ENCODE measurements at regions of chr9 and their contacts with region 1.

Region 1: DNA sequence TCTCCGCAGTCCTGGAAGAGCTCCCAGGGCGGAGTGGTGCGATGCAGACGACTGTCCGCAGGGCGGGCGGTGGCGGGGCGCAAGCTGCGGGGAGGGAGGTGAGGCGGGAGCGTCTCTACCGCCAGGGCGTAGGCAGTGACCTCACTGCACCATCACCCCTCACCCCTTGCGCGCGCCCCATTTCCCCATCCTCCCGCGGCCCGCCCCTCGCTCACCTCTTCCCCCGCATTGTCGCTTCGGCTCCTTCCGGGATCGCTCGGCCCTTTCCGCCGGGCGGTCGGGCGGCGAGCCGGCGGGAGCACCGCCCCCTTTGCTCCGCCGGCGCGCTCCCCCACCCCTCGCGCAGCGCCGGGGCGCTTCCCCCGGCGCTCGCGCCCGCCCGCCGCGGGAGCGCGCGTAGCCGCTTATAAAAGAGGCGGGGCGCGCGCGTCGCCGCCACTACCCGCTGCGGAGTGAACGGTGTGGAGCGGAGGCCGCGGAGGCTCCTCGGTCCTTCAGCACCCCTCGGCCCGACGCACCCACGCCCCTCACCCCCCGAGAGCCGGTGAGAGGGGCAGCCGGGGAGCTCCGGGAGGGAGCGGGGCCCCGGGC is at the start of gene SPTAN1:
- DNase-seq: peak; percentile 69 to 76
- ATAC-seq: peak; percentile 88 to 94
- H3K4me3 ChIP-seq: peak within 1 kb of the TSS; percentile 74 to 100 (median 91)
- H3K27ac ChIP-seq: peak within 1 kb of the TSS; percentile 77 to 97 (median 92)
- H3K4me1 ChIP-seq: peaks cover 45 to 49% of the 10 kb centered on the region in 2 donors
- H3K27me3 ChIP-seq: no peaks in the 10 kb centered on the region
- CTCF ChIP-seq: peak in 3 of 5 experiments; percentile 17 to 28 (median 26)
- POLR2A ChIP-seq: peak; percentile 98 to 99
- total RNA-seq, gene SPTAN1: 30.2 to 41.5 (median 33.0) TPM

Region 2: GRCh38 chr9:128439273-128439672 is 113.0 kb before region 1 on chr9:
- in situ Hi-C with region 1: no loop called
- intact Hi-C with region 1: no loop called
- DNase-seq: no peak
- ATAC-seq: no peak
- H3K4me3 ChIP-seq: no peak overlapping the region
- H3K27ac ChIP-seq: no peak overlapping the region
- H3K4me1 ChIP-seq: no peaks in the 10 kb centered on the region
- H3K27me3 ChIP-seq: no peaks in the 10 kb centered on the region
- CTCF ChIP-seq: no peak
- POLR2A ChIP-seq: no peak

Region 3: DNA sequence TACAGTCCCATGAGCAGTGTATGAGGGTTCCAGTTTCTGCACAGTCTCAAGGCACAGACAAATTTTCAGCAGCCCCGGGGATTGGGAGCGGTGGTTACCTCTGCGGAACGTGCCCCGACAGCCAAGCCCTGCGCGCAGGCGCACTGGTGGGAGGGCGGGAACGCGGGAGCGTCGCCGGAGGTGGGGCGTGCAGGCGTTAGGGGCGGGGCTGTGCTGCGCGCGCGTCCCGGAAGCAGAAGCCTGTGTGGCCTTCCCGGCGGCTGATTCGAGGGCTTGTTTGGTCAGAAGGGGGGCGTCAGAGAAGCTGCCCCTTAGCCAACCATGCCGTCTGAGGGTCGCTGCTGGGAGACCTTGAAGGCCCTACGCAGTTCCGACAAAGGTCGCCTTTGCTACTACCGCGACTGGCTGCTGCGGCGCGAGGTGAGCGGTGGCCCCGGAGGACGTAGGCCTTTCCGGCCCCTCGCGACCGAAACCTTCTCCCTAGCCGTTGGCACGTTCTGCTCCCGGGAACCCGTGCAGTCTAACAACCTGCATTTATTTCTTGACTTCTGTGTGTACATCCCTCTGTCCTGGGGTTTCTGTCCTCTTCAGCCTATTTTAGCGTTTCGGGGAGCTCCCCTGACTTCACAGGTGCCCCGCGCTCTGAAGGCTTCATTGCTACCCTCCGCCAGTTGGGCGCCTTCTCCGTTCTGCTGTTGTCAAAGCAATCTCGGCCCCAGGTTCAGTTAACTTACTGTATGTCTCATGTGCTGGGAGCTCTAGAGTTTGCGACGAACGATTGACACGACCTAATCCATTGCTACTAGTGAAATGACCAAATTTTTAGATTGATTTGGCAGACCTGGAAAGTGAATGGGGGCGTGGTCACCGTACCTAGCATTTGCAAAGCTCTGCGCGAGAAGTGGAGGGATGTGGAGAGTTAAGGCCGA is 47.5 kb before region 1 on chr9 and contains the start of gene GLE1:
- in situ Hi-C with region 1: no loop called
- intact Hi-C with region 1: loop called (anchors 5 kb)
- DNase-seq: peak; percentile 86 to 91
- ATAC-seq: peak; percentile 94 to 97
- H3K4me3 ChIP-seq: peak within 1 kb of the TSS; percentile 78 to 95 (median 88)
- H3K27ac ChIP-seq: peak within 1 kb of the TSS; percentile 82 to 93 (median 84)
- H3K4me1 ChIP-seq: peaks cover 15 to 18% of the 10 kb centered on the region in 2 donors
- H3K27me3 ChIP-seq: no peaks in the 10 kb centered on the region
- CTCF ChIP-seq: no peak
- POLR2A ChIP-seq: peak; percentile 30 to 68
- total RNA-seq, gene GLE1: 31.4 to 56.7 (median 32.7) TPM

Region 4: GRCh38 chr9:128588581-128589233 is 36.5 kb after region 1 on chr9:
- in situ Hi-C with region 1: no loop called
- intact Hi-C with region 1: no loop called
- DNase-seq: no peak
- ATAC-seq: no peak
- H3K4me3 ChIP-seq: no peak overlapping the region
- H3K27ac ChIP-seq: no peak overlapping the region
- H3K4me1 ChIP-seq: no peaks in the 10 kb centered on the region
- H3K27me3 ChIP-seq: no peaks in the 10 kb centered on the region
- CTCF ChIP-seq: no peak
- POLR2A ChIP-seq: no peak

Region 5: DNA sequence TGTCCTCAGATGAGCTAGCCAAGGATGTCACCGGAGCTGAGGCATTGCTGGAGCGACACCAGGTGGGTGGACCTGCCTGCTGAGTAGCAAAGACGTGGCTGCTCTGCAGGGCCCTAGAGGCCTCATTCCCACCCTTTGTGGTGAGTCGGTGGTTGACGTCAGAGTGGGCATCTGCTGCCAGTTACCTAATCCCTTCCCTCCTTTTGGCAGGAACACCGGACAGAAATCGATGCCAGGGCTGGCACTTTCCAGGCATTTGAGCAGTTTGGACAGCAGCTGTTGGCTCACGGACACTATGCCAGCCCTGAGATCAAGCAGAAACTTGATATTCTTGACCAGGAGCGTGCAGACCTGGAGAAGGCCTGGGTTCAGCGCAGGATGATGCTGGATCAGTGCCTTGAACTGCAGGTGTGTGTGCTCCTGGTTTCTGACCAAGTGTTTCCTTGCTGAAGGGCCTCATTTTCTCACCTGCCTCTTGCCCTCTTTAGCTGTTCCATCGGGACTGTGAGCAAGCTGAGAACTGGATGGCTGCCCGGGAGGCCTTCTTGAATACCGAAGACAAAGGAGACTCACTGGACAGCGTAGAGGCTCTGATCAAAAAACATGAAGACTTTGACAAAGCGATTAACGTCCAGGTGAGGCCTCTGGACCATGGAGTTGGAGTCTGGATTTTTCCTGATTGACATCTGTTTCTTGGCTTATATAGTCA is 55.5 kb after region 1 on chr9:
- in situ Hi-C with region 1: no loop called
- intact Hi-C with region 1: loop called (anchors 2 kb)
- DNase-seq: peak; percentile 88 to 98
- ATAC-seq: peak; percentile 98 to 99
- H3K4me3 ChIP-seq: no peak overlapping the region
- H3K27ac ChIP-seq: peak overlapping the region; percentile 73 to 83 (median 76)
- H3K4me1 ChIP-seq: peaks cover 14 to 15% of the 10 kb centered on the region in 2 donors
- H3K27me3 ChIP-seq: no peaks in the 10 kb centered on the region
- CTCF ChIP-seq: no peak
- POLR2A ChIP-seq: no peak

Region 6: DNA sequence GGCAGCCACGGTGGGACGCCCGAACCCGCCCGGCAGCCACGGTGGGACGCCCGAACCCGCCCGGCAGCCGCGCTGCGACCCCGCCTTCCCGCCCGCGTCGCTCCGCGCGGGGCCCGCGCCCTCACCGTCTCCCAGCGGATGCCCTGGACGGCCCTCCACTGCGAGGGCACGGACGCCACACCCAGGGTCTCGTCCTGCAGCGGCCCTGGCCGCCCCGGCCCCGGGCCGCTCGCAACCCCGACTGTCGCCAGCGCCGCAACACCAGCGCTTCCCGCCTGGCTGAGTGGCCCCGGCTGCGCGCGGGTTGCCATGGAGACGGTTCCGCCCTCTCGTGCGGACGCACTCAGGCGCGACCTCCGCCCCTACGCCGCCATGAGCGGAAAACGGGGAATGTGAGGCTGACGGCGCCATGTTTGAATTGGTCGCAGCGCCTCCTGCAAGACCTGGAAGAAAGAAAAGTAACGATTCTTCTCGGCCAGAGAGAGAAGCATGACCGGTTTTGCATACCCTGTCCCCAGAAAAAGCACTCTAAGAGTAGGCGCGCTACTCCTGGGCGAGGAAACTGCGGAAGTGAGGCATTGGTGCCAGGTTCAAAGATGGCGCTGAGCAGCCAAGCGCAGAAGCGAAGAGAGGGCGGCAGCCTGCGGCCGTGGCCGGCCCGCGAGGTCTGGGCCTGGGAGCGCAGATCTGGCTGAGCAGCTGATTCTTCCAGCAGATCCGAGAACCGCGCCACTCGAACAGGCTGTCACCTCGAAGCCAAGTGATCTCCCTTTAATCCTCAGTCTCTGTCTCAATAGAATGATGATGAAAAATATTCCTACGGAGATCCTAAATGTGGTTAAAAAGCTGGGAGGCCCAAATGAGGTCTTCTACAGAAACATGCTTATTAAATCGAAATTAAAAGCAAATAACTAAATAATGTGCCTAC is 104.4 kb after region 1 on chr9 and contains the start of gene DYNC2I2:
- in situ Hi-C with region 1: no loop called
- intact Hi-C with region 1: no loop called
- DNase-seq: peak; percentile 94
- ATAC-seq: peak; percentile 99
- H3K4me3 ChIP-seq: peak within 1 kb of the TSS; percentile 48 to 83 (median 71)
- H3K27ac ChIP-seq: peak within 1 kb of the TSS; percentile 92 to 100 (median 94)
- H3K4me1 ChIP-seq: no peaks in the 10 kb centered on the region
- H3K27me3 ChIP-seq: no peaks in the 10 kb centered on the region
- CTCF ChIP-seq: peak in 1 of 5 experiments; percentile 9
- POLR2A ChIP-seq: peak; percentile 20 to 29
- total RNA-seq, gene DYNC2I2: 11.4 to 29.1 (median 21.1) TPM

Region 7: DNA sequence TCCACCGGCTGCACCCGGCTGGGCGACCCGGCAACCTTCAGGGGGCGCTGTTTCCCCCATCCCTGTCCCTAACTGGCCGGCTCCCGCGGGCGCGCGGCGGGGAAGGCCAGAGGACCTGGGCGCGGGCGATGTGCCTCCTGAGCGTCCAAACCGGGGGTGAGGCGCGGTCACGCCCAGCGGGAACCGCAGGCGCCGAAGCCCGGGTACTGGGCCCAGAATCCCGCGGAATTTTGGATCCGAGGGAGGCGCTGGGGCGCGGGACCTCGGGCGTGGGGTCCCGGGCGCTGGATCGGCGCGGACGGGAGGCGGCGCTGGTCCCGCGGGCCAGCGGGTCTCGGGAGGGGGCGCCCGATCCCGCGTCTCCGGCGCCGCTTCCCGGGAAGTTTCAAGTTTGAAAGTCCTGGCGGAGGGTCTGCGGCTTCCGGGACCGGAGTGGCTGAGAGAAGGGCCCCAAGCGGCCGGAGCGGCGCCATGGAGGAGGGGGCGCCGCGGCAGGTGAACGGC is 150.2 kb after region 1 on chr9 and contains the start of gene PKN3:
- in situ Hi-C with region 1: no loop called
- intact Hi-C with region 1: no loop called
- DNase-seq: peak; percentile 57 to 69
- ATAC-seq: peak; percentile 86 to 91
- H3K4me3 ChIP-seq: peak within 1 kb of the TSS; percentile 62 to 89 (median 76)
- H3K27ac ChIP-seq: peak within 1 kb of the TSS; percentile 69 to 79 (median 74)
- H3K4me1 ChIP-seq: peaks cover 0 to 11% of the 10 kb centered on the region in 2 donors
- H3K27me3 ChIP-seq: no peaks in the 10 kb centered on the region
- CTCF ChIP-seq: peak; percentile 66 to 91 (median 85)
- POLR2A ChIP-seq: no peak
- total RNA-seq, gene PKN3: 1.4 to 5.2 (median 3.3) TPM

Measured in gastrocnemius medialis (tissue), 4 donors.